Activated naive CD4-positive, alpha-beta T cell treated with anti-CD3 and anti-CD28 coated beads for 36 hours (primary cell): ENCODE measurements at regions of chr6 and their contacts with region 1.

Region 1: DNA sequence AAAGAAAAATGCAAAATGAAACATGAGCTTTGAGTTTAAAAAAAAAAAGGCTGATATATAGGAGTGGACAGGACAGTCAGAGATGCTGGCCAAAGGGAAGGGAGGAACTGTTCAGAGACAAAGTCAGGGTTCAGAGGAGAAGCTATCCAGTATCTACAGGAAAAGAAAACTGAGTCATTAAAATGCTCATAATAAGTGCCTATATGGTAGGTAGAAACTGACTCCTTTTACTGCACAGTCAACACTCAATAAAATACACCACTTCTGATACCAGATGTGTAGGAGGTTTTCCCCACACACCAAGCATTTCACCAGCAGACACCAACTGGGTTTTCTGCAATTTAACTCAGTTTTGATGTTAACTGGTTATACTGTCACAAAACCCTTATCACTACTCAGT is 32.9 kb downstream of the FRK start:
- DNase-seq: no peak
- H3K4me3 Mint-ChIP-seq: no peak overlapping the region
- H3K27ac Mint-ChIP-seq: no peak overlapping the region
- H3K4me1 Mint-ChIP-seq: peaks cover 15% of the 10 kb centered on the region
- H3K27me3 Mint-ChIP-seq: peaks cover 3% of the 10 kb centered on the region

Region 2: GRCh38 chr6:116476002-116476678 is 448.3 kb after region 1 on chr6:
- CTCF ChIA-PET with region 1: no interaction called
- intact Hi-C with region 1: loop called (anchors 5 kb)
- DNase-seq: peak; percentile 25
- H3K4me3 Mint-ChIP-seq: no peak overlapping the region
- H3K27ac Mint-ChIP-seq: no peak overlapping the region
- H3K4me1 Mint-ChIP-seq: peaks cover 18% of the 10 kb centered on the region
- H3K27me3 Mint-ChIP-seq: peaks cover 3% of the 10 kb centered on the region